AG04450 (cell line): ENCODE measurements at regions of chr1 and their contacts with region 1.

Region 1: DNA sequence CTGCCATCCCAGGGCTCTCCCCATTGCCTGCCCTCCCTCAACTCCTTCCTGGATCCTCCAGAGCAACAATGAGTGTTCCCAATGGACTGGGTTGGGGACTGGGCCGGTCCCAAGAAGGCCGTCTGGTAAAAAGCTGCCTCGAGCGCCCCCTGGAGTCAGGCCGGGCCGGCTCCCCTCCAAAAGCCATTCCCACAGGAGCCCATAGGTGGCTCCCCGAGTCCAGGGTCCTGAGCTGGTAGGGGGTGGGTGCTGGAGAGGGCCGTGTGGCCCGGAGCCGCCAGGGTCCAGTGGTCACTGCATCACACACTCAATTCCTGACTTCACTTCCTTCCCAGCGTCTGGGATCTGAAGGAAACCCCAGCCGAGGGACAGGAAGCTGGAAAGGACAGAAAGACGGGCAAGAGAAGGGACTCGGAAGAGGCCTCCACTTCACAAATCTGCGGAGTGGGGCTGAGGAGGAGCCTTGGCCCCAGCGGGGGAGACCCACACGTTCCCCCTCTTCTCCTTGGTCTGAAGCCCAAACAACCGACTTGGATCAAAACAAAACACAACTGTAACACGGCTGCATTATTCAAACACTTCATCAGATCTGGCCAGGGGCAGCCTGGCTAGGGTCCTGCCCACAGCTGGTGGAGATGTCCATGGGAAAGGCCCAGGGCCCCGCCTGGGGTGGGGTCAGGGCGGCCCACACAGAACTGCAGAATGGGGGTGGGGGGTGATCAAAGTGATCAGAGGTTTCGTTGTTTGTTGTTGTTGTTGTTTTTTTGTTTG is 10.9 kb upstream of the ALDH4A1 start:
- DNase-seq: peak; percentile 43
- H3K4me3 ChIP-seq: no peak overlapping the region
- H3K27ac ChIP-seq: peak overlapping the region; percentile 33
- H3K27me3 ChIP-seq: no peaks in the 10 kb centered on the region
- CTCF ChIP-seq: peak; percentile 100

Region 2: GRCh38 chr1:18849261-18849711 is 64.0 kb before region 1 on chr1:
- CTCF ChIA-PET with region 1: no interaction called
- POLR2A ChIA-PET with region 1: no interaction called
- DNase-seq: no peak
- H3K4me3 ChIP-seq: no peak overlapping the region
- H3K27ac ChIP-seq: no peak overlapping the region
- H3K27me3 ChIP-seq: peaks cover 11% of the 10 kb centered on the region
- CTCF ChIP-seq: no peak

Region 3: GRCh38 chr1:18883636-18884418 is 29.4 kb before region 1 on chr1:
- CTCF ChIA-PET with region 1: interaction called, 11 read pairs
- POLR2A ChIA-PET with region 1: no interaction called
- DNase-seq: peak; percentile 33
- H3K4me3 ChIP-seq: no peak overlapping the region
- H3K27ac ChIP-seq: no peak overlapping the region
- H3K27me3 ChIP-seq: no peaks in the 10 kb centered on the region
- CTCF ChIP-seq: peak; percentile 94

Region 4: GRCh38 chr1:18932387-18932786 is 19.1 kb after region 1 on chr1:
- CTCF ChIA-PET with region 1: interaction called, 60 read pairs
- POLR2A ChIA-PET with region 1: interaction called, 3 read pairs
- DNase-seq: no peak
- H3K4me3 ChIP-seq: no peak overlapping the region
- H3K27ac ChIP-seq: no peak overlapping the region
- H3K27me3 ChIP-seq: no peaks in the 10 kb centered on the region
- CTCF ChIP-seq: no peak

Region 5: GRCh38 chr1:18956369-18957135 is 43.3 kb after region 1 on chr1 and contains the start of gene IFFO2:
- CTCF ChIA-PET with region 1: interaction called, 32 read pairs
- POLR2A ChIA-PET with region 1: no interaction called
- DNase-seq: peak; percentile 81
- H3K4me3 ChIP-seq: peak within 1 kb of the TSS; percentile 73
- H3K27ac ChIP-seq: peak within 1 kb of the TSS; percentile 21
- H3K27me3 ChIP-seq: peaks cover 11% of the 10 kb centered on the region
- CTCF ChIP-seq: no peak
- polyA plus RNA-seq, gene IFFO2: 6.8 and 7.8 TPM in 2 replicates

Region 6: DNA sequence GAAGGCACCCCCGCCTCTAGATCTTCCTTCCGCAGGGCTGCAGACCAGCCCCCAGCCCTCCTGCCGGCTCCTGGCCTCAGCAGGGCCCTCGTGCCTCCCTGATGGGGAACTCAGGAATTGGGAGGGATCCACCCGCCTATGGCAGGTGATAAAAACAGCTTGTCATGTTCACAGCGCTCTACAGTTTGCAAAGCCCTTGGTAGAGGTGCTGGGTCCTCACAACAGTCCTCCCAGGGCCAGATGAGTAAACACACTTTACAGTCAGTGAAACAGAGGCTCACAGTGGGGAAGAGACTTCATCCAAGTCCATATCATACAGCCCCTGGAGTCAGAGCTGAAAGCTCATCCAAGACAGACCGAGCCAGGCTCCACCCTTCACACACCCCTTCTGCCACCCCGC is 140.2 kb after region 1 on chr1:
- CTCF ChIA-PET with region 1: interaction called, 10 read pairs
- POLR2A ChIA-PET with region 1: no interaction called
- DNase-seq: no peak
- H3K4me3 ChIP-seq: no peak overlapping the region
- H3K27ac ChIP-seq: no peak overlapping the region
- H3K27me3 ChIP-seq: peaks cover 38% of the 10 kb centered on the region
- CTCF ChIP-seq: no peak

Region 7: GRCh38 chr1:19081218-19081893 is 168.1 kb after region 1 on chr1:
- CTCF ChIA-PET with region 1: interaction called, 24 read pairs
- POLR2A ChIA-PET with region 1: no interaction called
- DNase-seq: no peak
- H3K4me3 ChIP-seq: no peak overlapping the region
- H3K27ac ChIP-seq: peak overlapping the region; percentile 31
- H3K27me3 ChIP-seq: no peaks in the 10 kb centered on the region
- CTCF ChIP-seq: no peak

Region 8: DNA sequence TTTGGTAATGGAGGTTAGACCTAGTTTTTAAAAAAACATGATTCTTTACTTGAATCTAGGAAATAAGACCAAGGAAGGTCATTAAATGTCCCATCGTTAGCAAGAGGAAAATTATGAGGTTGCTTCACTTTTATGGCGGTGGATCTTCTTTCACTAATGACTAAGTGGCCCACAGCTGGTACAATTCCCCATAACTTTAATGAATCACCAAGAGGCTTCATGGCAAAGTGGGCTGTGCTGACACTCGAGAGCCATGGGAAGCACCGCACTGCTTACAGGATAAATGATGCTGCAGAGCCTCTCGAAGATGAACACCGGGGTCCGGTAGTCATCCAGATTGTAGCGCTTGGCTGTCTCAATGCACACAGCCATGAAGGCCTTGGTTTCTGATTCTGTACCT is 188.0 kb after region 1 on chr1:
- CTCF ChIA-PET with region 1: interaction called, 49 read pairs
- POLR2A ChIA-PET with region 1: no interaction called
- DNase-seq: no peak
- H3K4me3 ChIP-seq: no peak overlapping the region
- H3K27ac ChIP-seq: no peak overlapping the region
- H3K27me3 ChIP-seq: no peaks in the 10 kb centered on the region
- CTCF ChIP-seq: no peak